ENCODE measurements at regions of chr13 and their contacts with region 1.

Region 1: GRCh38 chr13:21638319-21639282 is 32.3 kb upstream of the FGF9 start:
- DNase-seq: no peak
- ATAC-seq: no peak
- H3K4me3 Mint-ChIP-seq: no peak overlapping the region
- H3K27ac Mint-ChIP-seq: no peak overlapping the region
- H3K4me1 Mint-ChIP-seq: no peaks in the 10 kb centered on the region
- H3K27me3 Mint-ChIP-seq: no peaks in the 10 kb centered on the region; the same call in 1 of the 2 replicates
- CTCF ChIP-seq: peak; percentile 70

Region 2: GRCh38 chr13:21616880-21617279 is 21.7 kb before region 1 on chr13:
- CTCF ChIA-PET with region 1: interaction called, 10 read pairs
- POLR2A ChIA-PET with region 1: no interaction called
- DNase-seq: no peak
- ATAC-seq: no peak
- H3K4me3 Mint-ChIP-seq: no peak overlapping the region
- H3K27ac Mint-ChIP-seq: no peak overlapping the region
- H3K4me1 Mint-ChIP-seq: no peaks in the 10 kb centered on the region
- H3K27me3 Mint-ChIP-seq: no peaks in the 10 kb centered on the region; the same call in 1 of the 2 replicates
- CTCF ChIP-seq: no peak

Region 3: DNA sequence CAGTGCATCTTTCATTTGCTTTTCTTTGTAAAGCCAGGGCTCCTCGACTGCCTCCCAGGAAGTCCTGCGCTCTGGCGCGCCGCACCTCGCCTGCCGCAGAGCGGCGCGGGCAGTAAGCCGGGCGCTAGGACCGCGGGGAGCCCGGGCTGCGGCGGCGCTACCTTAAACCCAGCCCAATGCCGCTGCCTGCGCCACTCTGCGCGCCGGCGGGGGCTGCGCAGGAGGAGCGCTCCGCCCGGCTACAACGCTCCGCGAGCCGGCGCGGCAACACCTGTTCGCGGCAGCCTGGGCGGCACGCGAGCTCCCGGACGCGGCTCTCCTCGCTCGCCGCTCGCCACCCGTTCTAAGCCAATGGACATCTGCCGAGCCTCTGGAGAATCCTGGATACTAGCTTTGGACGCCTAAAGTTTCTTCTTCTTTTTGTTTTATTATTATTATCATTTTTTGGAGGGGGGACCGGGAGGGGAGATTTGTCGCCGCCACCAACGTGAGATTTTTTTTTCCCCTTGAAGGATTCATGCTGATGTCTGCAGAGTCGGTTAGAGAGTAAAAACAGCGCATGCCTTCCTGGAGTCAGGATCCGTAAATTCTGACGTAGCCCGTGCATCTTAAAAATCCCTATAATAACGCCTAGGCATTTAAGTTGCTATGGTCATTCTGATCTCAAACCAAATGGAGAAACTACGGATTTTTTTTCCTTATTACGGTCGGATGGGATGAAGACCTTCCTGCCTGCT is 32.5 kb after region 1 on chr13 and contains the start of gene FGF9:
- CTCF ChIA-PET with region 1: interaction called, 22 read pairs
- POLR2A ChIA-PET with region 1: interaction called, 3 read pairs
- DNase-seq: peak; percentile 83
- ATAC-seq: peak; percentile 49
- H3K4me3 Mint-ChIP-seq: peak within 1 kb of the TSS; percentile 86
- H3K27ac Mint-ChIP-seq: peak within 1 kb of the TSS; percentile 12; the same call in 1 of the 2 replicates
- H3K4me1 Mint-ChIP-seq: peaks cover 42% of the 10 kb centered on the region
- H3K27me3 Mint-ChIP-seq: peaks cover 89% of the 10 kb centered on the region
- CTCF ChIP-seq: no peak
- total RNA-seq, gene FGF9: 0.25 to 0.27 TPM (median 0.26 TPM) in 3 replicates

Region 4: DNA sequence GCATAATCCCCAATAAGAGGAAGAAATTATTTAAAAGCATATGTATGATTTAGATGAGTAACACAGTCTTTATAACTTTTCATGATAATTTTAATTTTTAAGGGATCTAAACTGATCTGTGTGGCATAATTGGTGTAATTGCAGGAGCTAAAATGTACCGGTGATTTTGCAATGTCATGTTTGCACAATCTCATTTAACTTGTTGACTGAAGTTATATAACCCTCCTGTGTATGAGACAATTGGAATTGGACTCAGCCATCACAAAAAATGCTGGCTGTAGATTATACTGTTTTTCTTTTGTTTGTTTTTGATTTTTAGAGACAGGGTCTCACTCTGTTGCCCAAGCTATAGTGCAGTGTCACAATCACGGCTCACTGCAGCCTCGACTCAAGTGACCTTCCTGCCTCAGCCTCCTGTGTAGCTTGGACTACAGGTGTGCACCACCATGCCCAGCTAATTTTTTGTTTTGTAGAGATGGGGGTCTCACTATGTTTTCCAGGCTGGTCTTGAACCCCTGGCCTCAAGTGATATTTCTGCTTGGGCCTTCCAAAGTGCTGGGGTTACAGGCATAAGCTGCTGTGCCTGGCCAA is 58.4 kb after region 1 on chr13:
- CTCF ChIA-PET with region 1: interaction called, 10 read pairs
- POLR2A ChIA-PET with region 1: no interaction called
- DNase-seq: no peak
- ATAC-seq: no peak
- H3K4me3 Mint-ChIP-seq: no peak overlapping the region
- H3K27ac Mint-ChIP-seq: no peak overlapping the region
- H3K4me1 Mint-ChIP-seq: peaks cover 34% of the 10 kb centered on the region
- H3K27me3 Mint-ChIP-seq: no peaks in the 10 kb centered on the region
- CTCF ChIP-seq: no peak